Adrenal gland (tissue), 19 donors: ENCODE measurements at regions of chr1 and their contacts with region 1.

Region 1: GRCh38 chr1:206544562-206545257 is 37.4 kb downstream of the RASSF5 start:
- DNase-seq: peak; percentile 60 to 88 (median 78)
- H3K4me3 ChIP-seq: no peak overlapping the region
- H3K27ac ChIP-seq: no peak overlapping the region
- H3K4me1 ChIP-seq: peaks cover 5 to 9% of the 10 kb centered on the region in 2 donors
- H3K27me3 ChIP-seq: no peaks in the 10 kb centered on the region
- CTCF ChIP-seq: peak; percentile 62 to 88 (median 80)
- POLR2A ChIP-seq: no peak

Region 2: GRCh38 chr1:206583707-206584648 is 39.3 kb after region 1 on chr1:
- intact Hi-C with region 1: loop called (anchors 2 kb)
- DNase-seq: peak; percentile 74 to 92 (median 85)
- H3K4me3 ChIP-seq: no peak overlapping the region
- H3K27ac ChIP-seq: no peak overlapping the region
- H3K4me1 ChIP-seq: peaks cover 8 to 41% of the 10 kb centered on the region in 2 donors
- H3K27me3 ChIP-seq: no peaks in the 10 kb centered on the region
- CTCF ChIP-seq: peak; percentile 87 to 93 (median 91)
- POLR2A ChIP-seq: no peak

Region 3: GRCh38 chr1:207084701-207085180 is 540.0 kb after region 1 on chr1:
- intact Hi-C with region 1: no loop called
- DNase-seq: peak; percentile 39 to 72 (median 56)
- H3K4me3 ChIP-seq: no peak overlapping the region
- H3K27ac ChIP-seq: no peak overlapping the region
- H3K4me1 ChIP-seq: peaks cover 0 to 10% of the 10 kb centered on the region in 2 donors
- H3K27me3 ChIP-seq: no peaks in the 10 kb centered on the region
- CTCF ChIP-seq: peak; percentile 39 to 68 (median 66)
- POLR2A ChIP-seq: no peak